ENCODE measurements at regions of chr12 and their contacts with region 1.

Region 1: DNA sequence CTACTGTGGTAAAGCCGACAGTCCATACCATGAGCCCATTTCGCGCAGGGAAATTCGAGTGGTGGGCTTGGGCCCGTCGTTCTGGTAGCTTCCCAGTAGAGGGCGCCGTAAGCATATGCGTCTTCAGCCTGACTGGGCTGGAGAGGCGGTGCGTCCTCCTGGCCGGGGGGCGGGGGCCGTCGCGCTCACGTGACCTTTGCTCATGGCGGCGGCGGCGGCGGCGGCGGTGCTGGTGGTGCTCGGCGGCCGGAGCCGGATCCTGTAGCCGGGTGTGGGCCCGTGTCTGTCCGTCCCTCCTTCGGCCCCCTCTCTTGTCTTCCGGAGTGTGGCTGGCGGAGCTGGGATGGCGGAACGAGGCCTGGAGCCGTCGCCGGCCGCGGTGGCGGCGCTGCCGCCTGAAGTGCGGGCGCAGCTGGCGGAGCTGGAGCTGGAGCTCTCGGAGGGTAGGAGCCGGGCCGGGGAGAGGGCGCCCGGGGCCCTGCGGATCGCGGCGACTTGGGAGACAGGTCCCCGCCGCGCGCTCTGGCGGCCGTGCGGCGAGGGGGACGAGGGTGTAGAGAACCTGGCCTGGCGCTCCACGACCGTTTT is at the start of gene DIP2B:
- DNase-seq: peak; percentile 92
- H3K4me3 Mint-ChIP-seq: peak within 1 kb of the TSS; percentile 96
- H3K27ac Mint-ChIP-seq: peak within 1 kb of the TSS; percentile 93
- H3K4me1 Mint-ChIP-seq: peaks cover 45% of the 10 kb centered on the region
- H3K27me3 Mint-ChIP-seq: no peaks in the 10 kb centered on the region
- total RNA-seq, gene DIP2B: 27.4 and 29.1 TPM in 2 replicates

Region 2: GRCh38 chr12:50555471-50555885 is 50.6 kb after region 1 on chr12:
- intact Hi-C with region 1: loop called (anchors 2 kb)
- DNase-seq: no peak
- H3K4me3 Mint-ChIP-seq: peak overlapping the region; percentile 44
- H3K27ac Mint-ChIP-seq: peak overlapping the region; percentile 95
- H3K4me1 Mint-ChIP-seq: peaks cover 33% of the 10 kb centered on the region
- H3K27me3 Mint-ChIP-seq: no peaks in the 10 kb centered on the region

Region 3: DNA sequence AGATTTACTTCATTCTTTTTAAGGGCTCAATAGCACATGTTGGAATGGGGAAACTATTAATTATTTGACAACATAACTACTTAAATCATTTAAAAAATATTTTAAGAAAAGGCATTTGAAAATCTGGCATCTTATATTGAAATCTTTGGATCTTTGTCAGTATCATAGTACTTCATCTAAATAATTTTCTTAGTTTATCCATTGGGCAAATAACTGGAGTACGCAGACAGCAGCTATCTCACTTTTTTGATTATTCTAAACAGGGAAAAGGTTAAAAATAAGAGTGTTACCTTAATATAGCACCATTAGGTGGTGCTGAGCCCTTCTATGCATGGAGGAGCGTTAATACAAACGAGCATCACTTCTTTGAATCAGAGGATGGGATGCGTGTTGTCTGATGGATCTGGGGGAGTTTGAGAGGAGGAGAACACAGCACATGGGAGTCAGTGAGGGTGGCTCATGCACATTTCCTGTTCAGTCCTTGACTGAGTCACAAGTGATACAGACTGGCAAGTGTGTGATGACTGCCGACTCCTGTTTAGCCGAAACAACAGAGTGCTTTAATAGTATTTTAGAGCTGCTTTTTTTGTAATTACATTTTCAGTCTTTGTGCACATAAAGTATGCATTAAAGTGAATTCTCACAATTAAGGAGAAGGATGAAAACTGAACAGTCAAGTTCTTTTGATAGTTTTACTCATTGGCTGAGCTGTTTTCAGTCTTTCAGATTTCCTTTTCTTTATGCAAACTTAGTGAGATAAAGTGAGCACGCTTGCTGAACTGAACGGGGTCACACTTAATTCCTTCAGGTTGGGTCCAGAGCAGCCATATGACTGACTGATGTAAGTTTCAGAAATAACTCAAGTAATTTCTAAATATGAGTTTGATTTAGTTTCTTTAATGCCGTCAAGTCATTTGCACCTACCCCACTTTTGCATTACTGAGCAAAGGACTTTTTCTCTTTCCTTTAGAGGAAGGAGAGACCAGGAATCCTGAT is 92.6 kb after region 1 on chr12:
- intact Hi-C with region 1: loop called (anchors 2 kb)
- DNase-seq: peak; percentile 19
- H3K4me3 Mint-ChIP-seq: peak overlapping the region; percentile 10
- H3K27ac Mint-ChIP-seq: peak overlapping the region; percentile 47
- H3K4me1 Mint-ChIP-seq: peaks cover 27% of the 10 kb centered on the region
- H3K27me3 Mint-ChIP-seq: no peaks in the 10 kb centered on the region

Region 4: GRCh38 chr12:50637870-50638481 is 133.1 kb after region 1 on chr12:
- intact Hi-C with region 1: loop called (anchors 1 kb)
- DNase-seq: no peak
- H3K4me3 Mint-ChIP-seq: no peak overlapping the region
- H3K27ac Mint-ChIP-seq: peak overlapping the region; percentile 7
- H3K4me1 Mint-ChIP-seq: peaks cover 43% of the 10 kb centered on the region
- H3K27me3 Mint-ChIP-seq: no peaks in the 10 kb centered on the region

Region 5: GRCh38 chr12:50734409-50735263 is 229.7 kb after region 1 on chr12:
- intact Hi-C with region 1: loop called (anchors 10 kb)
- DNase-seq: no peak
- H3K4me3 Mint-ChIP-seq: no peak overlapping the region
- H3K27ac Mint-ChIP-seq: no peak overlapping the region
- H3K4me1 Mint-ChIP-seq: no peaks in the 10 kb centered on the region
- H3K27me3 Mint-ChIP-seq: no peaks in the 10 kb centered on the region